ENCODE measurements at regions of chr3 and their contacts with region 1.

Region 1: DNA sequence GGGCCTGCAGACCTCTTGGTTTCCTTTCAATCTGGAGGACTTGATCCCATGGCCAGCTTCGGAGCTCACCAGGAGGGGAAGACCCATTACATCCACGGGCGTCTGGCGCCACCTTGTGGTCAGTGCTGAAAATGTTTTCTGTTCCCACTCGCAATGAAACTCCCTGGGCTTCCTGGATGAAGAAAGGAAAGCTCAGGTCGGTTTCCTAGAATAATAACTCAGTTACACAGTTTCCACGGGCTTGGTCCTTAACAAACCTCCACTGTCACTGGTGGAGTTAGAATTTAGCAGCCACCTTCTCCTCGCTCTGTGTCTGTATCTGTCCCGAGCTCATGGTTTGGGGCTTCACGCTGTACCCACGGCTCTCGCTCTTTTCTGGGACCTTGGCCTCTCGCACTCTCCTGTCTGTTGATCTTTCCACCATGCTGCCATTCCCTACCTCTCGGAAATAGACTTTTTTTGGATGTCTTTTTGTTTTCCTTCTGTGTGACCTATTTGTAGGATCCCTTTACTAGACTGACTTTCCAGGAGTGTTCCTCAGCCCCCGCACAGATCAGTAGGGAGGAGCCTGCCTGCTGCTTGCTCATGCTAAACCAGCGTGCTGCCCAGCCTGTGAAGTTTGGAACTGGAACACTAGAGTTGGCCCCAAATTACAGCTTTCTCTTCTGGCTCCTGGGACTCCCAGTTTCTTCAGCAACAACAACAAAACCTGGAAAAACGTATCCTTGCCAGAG is 56.3 kb downstream of the IL20RB start:
- DNase-seq: peak; percentile 91 to 94 (median 94)
- ATAC-seq: peak; percentile 96
- H3K4me3 ChIP-seq: peak overlapping the region in 1 of 2 donors; percentile 19
- H3K27ac ChIP-seq: peak overlapping the region; percentile 57 to 67 (median 59)
- H3K4me1 ChIP-seq: peaks cover 5% of the 10 kb centered on the region
- H3K27me3 ChIP-seq: no peaks in the 10 kb centered on the region
- CTCF ChIP-seq: peak; percentile 80 to 97 (median 93)
- POLR2A ChIP-seq: peak in 1 of 3 donors; percentile 5

Region 2: GRCh38 chr3:136075218-136075808 is 938.8 kb before region 1 on chr3:
- intact Hi-C with region 1: loop called (anchors 5 kb)
- DNase-seq: peak; percentile 71 to 80 (median 78)
- ATAC-seq: peak; percentile 84
- H3K4me3 ChIP-seq: no peak overlapping the region
- H3K27ac ChIP-seq: no peak overlapping the region
- H3K4me1 ChIP-seq: no peaks in the 10 kb centered on the region
- H3K27me3 ChIP-seq: no peaks in the 10 kb centered on the region
- CTCF ChIP-seq: peak; percentile 72 to 97 (median 97)
- POLR2A ChIP-seq: no peak

Region 3: DNA sequence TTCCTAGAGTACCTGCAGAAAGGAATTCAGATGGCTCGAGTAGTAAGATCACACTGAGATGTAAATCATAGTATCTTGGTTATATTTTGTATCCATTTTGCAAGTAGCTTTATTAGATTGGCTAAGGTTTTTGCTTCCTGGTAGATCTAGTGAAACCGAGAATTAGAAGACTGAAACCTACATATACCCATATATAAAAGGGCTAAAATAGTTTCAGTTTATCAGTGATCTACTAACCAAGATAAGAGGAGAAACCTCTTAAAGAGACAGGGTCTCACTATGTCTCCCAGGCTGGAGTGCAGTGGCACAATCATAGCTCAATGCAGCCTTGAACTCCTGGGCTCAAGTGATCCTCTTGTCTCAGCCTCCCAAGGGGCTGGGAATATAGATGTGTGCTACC is 628.7 kb before region 1 on chr3:
- intact Hi-C with region 1: loop called (anchors 10 kb)
- DNase-seq: no peak
- ATAC-seq: no peak
- H3K4me3 ChIP-seq: no peak overlapping the region
- H3K27ac ChIP-seq: no peak overlapping the region
- H3K4me1 ChIP-seq: no peaks in the 10 kb centered on the region
- H3K27me3 ChIP-seq: no peaks in the 10 kb centered on the region
- CTCF ChIP-seq: no peak
- POLR2A ChIP-seq: no peak

Region 4: DNA sequence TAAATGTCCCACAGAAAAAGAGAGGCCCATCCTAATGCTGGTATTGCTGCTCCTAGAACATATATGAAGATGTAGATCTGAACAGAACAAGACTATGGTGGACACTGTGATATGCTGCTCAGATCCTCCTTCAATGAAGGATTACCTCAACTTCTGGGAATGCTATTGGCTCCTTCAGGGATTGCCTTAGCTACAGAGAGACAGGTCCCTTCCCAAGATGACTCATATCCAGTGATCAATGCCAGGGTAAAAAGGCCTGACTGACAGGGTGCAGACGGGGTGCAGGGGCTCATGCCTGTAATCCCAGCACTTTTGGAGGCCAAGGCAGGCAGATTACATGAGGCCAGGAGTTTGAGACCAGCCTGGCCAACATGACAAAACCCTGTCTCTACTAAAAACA is 241.4 kb before region 1 on chr3:
- intact Hi-C with region 1: loop called (anchors 10 kb)
- DNase-seq: no peak
- ATAC-seq: no peak
- H3K4me3 ChIP-seq: no peak overlapping the region
- H3K27ac ChIP-seq: no peak overlapping the region
- H3K4me1 ChIP-seq: no peaks in the 10 kb centered on the region
- H3K27me3 ChIP-seq: no peaks in the 10 kb centered on the region
- CTCF ChIP-seq: no peak
- POLR2A ChIP-seq: no peak

Region 5: DNA sequence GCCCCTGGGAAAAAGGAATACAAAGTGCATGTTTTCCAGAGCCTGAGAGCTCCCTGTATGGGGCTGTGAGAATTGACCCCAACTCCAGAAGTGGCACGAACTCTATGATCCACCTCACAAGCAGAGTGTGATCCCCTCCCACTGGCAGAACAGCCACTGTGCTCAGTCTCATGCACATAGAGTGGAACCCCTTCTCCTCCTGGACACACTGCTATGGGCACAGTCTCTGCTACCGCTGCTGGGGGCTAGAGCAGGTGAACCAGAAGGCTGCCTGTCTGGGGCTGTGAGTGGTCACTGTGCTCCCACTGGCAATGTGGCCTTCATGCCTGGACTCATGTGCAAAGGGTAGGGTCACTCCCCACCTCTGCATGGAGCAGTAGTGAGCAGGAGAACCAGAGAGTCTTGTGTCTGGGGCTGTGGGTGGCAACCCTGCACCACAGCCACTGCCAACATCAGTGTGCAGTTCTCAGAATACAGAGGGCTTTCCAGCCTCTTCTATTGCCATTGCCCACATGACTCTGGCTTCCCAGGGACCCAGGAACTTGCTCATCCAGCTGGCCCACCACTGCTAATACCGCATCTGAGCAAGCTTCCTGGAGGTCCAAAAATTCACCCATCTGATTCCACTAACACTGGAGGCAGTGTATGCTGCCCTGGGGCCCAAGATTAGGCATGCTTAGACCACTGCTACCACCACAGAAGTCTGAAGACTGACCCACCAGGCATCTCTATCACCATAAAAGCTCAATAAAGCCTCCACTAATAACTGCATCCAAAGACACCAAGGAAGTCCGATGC is 406.3 kb after region 1 on chr3:
- intact Hi-C with region 1: no loop called
- DNase-seq: no peak
- ATAC-seq: no peak
- H3K4me3 ChIP-seq: no peak overlapping the region
- H3K27ac ChIP-seq: no peak overlapping the region
- H3K4me1 ChIP-seq: no peaks in the 10 kb centered on the region
- H3K27me3 ChIP-seq: no peaks in the 10 kb centered on the region
- CTCF ChIP-seq: no peak
- POLR2A ChIP-seq: no peak